OCI-LY7 (cell line): ENCODE measurements at regions of chr3 and their contacts with region 1.

Region 1: DNA sequence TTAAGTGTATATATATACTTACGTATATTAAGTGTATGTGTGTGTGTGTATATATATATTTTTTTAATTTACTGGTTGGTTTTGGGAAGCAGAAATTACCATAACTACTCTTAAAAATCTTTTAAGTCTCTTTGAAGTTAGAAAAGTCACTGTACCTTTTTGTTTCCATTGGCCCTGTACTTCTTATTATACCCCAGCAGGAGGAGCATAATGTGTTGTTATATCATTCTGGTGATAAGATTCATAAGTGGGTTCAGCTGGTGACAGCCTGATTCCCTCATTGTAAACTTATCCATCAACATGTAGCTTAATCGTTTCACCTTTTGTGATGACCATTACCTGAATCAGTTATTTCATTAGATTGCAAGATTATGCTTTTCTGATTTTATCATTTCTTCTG is 30.8 kb downstream of the MLH1 start:
- DNase-seq: peak; percentile 16
- H3K4me3 ChIP-seq: no peak overlapping the region
- H3K27ac ChIP-seq: peak overlapping the region; percentile 32
- H3K4me1 ChIP-seq: peaks cover 17% of the 10 kb centered on the region
- CTCF ChIP-seq: peak; percentile 50

Region 2: DNA sequence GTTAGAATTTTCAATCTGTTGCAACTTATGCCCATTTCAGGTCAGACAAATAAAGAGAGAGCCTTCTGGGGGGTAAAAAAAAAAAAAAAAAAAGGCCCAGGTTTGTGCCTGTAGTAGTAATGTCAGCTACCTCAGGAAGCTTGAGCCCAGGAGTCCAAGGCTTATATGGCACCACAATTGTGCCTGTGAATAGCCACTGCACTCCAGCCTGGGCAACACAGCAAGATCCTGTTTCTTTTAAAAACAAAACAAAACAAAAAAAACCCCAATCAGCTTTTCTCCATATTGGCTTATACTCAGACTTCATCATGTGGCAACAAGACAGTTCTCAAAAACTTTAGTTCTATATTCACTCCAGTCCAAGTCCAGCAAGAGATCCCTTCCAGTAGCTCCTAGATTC is 158.7 kb after region 1 on chr3:
- CTCF ChIA-PET with region 1: no interaction called
- POLR2A ChIA-PET with region 1: interaction called, 15 read pairs
- intact Hi-C with region 1: no loop called
- DNase-seq: no peak
- H3K4me3 ChIP-seq: no peak overlapping the region
- H3K27ac ChIP-seq: no peak overlapping the region
- H3K4me1 ChIP-seq: peaks cover 13% of the 10 kb centered on the region
- CTCF ChIP-seq: no peak